ENCODE measurements at regions of chr15 and their contacts with region 1.

Region 1: GRCh38 chr15:85730001-85730820 is 64.5 kb downstream of the KLHL25 start:
- DNase-seq: peak in 3 of 4 donors; percentile 43 to 71 (median 53)
- ATAC-seq: peak; percentile 85
- H3K4me3 ChIP-seq: no peak overlapping the region
- H3K27ac ChIP-seq: peak overlapping the region in 2 of 4 donors; percentile 6 to 25
- H3K4me1 ChIP-seq: no peaks in the 10 kb centered on the region
- H3K27me3 ChIP-seq: no peaks in the 10 kb centered on the region
- CTCF ChIP-seq: peak; percentile 39 to 85 (median 79)
- POLR2A ChIP-seq: no peak

Region 2: GRCh38 chr15:85582131-85583079 is 147.8 kb before region 1 on chr15:
- intact Hi-C with region 1: no loop called
- DNase-seq: peak; percentile 66 to 82 (median 77)
- ATAC-seq: peak; percentile 54
- H3K4me3 ChIP-seq: peak overlapping the region; percentile 38 to 43
- H3K27ac ChIP-seq: peak overlapping the region; percentile 88 to 97 (median 94)
- H3K4me1 ChIP-seq: peaks cover 79% of the 10 kb centered on the region
- H3K27me3 ChIP-seq: no peaks in the 10 kb centered on the region
- CTCF ChIP-seq: no peak
- POLR2A ChIP-seq: peak; percentile 10 to 67 (median 57)

Region 3: DNA sequence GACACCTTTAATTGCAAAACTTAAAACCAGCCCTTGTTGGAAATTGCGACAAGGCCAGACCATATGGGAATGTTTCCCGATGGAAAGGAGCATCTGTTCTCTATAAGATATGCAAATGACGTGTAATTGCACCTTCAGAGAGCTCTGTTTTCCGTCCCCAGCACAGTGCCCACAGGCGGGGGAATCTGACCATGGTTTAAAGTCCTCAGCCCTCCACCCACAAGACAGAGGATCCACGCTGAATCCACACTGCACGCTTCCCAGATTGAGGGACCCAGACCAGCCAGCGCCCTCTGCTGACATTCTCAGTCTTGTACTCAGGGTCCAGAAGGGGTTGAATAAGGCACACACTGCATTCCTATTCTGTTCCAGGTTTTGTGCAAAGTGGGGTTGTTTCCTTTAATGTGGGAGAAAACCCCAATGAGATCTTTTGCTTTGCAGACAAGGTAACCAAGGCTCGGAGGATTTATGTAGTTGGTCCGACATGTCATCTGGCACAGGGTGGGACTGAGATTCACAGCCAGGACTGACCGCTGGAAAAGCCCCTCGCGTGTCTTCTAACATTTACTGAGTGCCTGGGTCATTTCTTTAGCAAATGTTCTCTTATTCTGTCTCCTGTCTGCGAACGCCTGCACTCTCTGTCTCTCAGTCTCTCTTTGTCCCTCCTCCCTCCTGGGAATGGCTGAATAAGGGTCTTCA is 101.4 kb after region 1 on chr15:
- intact Hi-C with region 1: loop called (anchors 5 kb)
- DNase-seq: peak; percentile 67 to 77 (median 72)
- ATAC-seq: peak; percentile 87
- H3K4me3 ChIP-seq: no peak overlapping the region
- H3K27ac ChIP-seq: no peak overlapping the region
- H3K4me1 ChIP-seq: peaks cover 3% of the 10 kb centered on the region
- H3K27me3 ChIP-seq: no peaks in the 10 kb centered on the region
- CTCF ChIP-seq: peak in 6 of 7 experiments; percentile 40 to 66 (median 61)
- POLR2A ChIP-seq: no peak

Measured in body of pancreas (tissue), 4 donors.